ENCODE measurements at regions of chr7 and their contacts with region 1.

Region 1: DNA sequence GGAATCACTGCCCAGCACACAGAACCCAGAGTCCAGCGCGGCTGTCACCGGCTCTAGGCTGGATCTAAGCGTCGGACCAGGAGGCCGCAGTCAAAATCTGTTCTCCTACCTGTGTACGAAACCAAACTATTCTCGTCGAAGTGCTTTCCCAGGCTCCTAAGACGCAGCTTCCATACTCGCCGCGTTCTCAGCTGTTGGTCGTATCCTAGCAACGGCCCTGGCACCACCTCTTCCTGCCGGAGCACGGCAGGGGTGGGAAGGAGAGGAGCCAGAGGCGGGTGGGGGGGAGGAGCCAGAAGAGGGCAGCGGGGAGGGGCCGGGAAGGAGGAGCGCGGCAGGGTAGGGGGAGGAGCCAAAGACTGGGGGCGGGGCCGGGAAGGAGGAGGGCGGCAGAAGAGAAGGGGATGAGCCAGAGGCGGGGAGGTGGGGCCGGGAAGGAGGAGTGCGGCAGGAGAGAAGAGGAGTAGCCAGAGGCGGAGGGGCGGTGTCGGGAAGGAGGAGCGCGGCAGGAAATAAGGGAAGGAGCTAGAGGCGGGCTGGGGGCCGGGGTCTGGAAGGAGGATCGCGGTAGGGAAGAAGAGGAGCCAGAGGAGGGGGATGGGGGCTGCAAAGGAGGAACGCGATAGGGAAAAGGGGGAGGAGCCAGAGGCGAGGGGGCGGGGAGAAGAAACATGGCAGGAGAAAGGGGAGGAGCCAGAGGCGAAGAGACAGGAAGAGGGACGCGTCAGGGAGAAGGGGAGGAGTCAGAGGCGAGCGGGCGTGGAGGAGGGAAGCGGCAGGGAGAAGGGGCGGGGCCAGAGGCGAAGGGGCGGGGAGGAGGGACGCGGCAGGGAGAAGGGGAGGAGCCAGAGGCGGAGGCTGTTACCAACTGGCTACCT is at the start of gene IQUB:
- DNase-seq: peak; percentile 85 to 97
- ATAC-seq: peak; percentile 87 to 96 (median 90)
- H3K4me3 ChIP-seq: peak within 1 kb of the TSS; percentile 82
- H3K4me3 Mint-ChIP-seq: peak within 1 kb of the TSS; percentile 97
- H3K27ac ChIP-seq: peak within 1 kb of the TSS; percentile 71
- H3K27ac Mint-ChIP-seq: peak within 1 kb of the TSS; percentile 88 to 94
- H3K4me1 ChIP-seq: peaks cover 18% of the 10 kb centered on the region
- H3K4me1 Mint-ChIP-seq: peaks cover 18 to 25% of the 10 kb centered on the region in 2 donors
- H3K27me3 ChIP-seq: peaks cover 2% of the 10 kb centered on the region
- H3K27me3 Mint-ChIP-seq: peaks cover 6% of the 10 kb centered on the region in 2 donors
- CTCF ChIP-seq: no peak
- total RNA-seq, gene IQUB: 0.09 to 0.45 (median 0.18) TPM

Region 2: DNA sequence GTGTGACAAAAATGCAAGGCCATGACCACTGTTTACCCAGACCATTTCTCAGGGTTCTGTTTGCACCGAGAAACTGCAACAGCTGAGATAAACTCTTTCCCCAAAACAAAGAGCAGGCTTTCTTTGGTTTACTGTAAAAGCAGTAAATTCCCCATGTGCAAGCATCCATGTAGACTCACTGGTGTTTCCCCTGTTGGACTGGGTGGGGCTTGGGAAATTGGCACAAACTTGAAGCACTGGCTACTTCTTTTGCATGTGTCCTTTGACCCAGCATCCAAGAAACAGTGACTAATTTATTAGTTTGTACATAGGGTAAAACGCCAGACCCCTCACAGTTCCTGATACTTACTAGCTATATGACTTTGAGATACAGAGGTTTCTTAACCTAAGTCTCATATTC is 12.6 kb before region 1 on chr7:
- intact Hi-C with region 1: no loop called
- DNase-seq: no peak
- ATAC-seq: no peak
- H3K4me3 ChIP-seq: no peak overlapping the region
- H3K4me3 Mint-ChIP-seq: no peak overlapping the region
- H3K27ac ChIP-seq: no peak overlapping the region
- H3K27ac Mint-ChIP-seq: no peak overlapping the region
- H3K4me1 ChIP-seq: no peaks in the 10 kb centered on the region
- H3K4me1 Mint-ChIP-seq: no peaks in the 10 kb centered on the region
- H3K27me3 ChIP-seq: no peaks in the 10 kb centered on the region
- H3K27me3 Mint-ChIP-seq: peaks cover 9 to 17% of the 10 kb centered on the region in 2 donors
- CTCF ChIP-seq: no peak

Region 3: DNA sequence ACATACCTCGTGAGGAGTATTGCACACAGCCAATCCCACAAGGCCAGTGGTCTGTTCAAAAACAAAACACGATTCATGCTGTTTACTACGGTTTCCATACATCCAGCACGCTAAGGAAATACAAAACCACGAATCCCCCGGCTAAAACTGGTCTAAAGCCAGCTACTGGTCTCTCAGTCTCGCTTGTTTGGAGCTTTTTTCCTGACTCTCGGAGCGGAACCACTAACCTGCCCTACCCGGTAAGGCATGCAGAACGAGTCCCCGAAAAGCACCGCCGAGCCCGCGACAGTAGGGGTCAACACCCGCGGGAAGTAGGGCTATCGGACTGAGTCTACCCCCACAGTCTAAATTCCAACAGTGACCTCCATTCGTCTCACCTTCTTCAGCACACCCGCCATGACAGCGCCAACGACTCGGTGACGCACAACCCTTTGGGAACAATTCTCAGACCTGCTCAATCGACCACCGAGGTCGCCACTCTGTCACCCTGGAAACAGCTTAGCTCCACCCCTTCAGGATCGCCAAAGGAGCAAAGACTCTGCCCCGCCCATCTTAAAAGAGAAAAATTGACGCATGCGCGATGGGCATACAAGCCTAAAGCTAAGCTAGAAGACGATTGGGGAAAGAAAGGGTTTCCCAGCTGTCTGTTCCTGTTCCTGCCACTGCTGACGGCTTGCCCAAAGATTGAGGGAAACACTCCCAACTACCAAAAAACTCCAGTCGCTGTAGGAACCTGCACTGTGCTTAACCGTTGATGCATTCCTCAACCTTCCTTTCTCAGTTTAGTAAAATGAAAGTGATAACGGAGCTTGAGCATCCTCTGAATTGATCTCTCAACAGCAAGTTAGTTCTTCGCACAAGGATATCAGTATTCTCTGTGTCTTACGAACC is 23.0 kb after region 1 on chr7 and contains the start of gene NDUFA5:
- intact Hi-C with region 1: loop called (anchors 1 kb)
- DNase-seq: peak; percentile 88 to 100
- ATAC-seq: peak; percentile 97 to 100 (median 99)
- H3K4me3 ChIP-seq: peak within 1 kb of the TSS; percentile 92
- H3K4me3 Mint-ChIP-seq: no peak within 1 kb of the TSS
- H3K27ac ChIP-seq: peak within 1 kb of the TSS; percentile 77
- H3K27ac Mint-ChIP-seq: no peak within 1 kb of the TSS
- H3K4me1 ChIP-seq: peaks cover 5% of the 10 kb centered on the region
- H3K4me1 Mint-ChIP-seq: peaks cover 0 to 13% of the 10 kb centered on the region in 2 donors
- H3K27me3 ChIP-seq: no peaks in the 10 kb centered on the region
- H3K27me3 Mint-ChIP-seq: peaks cover 0 to 7% of the 10 kb centered on the region in 2 donors
- CTCF ChIP-seq: no peak
- total RNA-seq, gene NDUFA5: 46.0 to 51.2 (median 50.4) TPM

Measured in natural killer cell (primary cell).